Breast epithelium (tissue), 4 donors: ENCODE measurements at regions of chr9 and their contacts with region 1.

Region 1: GRCh38 chr9:117704024-117704575 is at the start of gene TLR4:
- DNase-seq: peak in 1 of 2 donors; percentile 35
- H3K4me3 ChIP-seq: peak within 1 kb of the TSS; percentile 43 to 69 (median 52)
- H3K27ac ChIP-seq: peak within 1 kb of the TSS; percentile 81 to 92
- H3K4me1 ChIP-seq: peaks cover 0 to 3% of the 10 kb centered on the region in 2 donors
- H3K27me3 ChIP-seq: no peaks in the 10 kb centered on the region
- CTCF ChIP-seq: no peak
- POLR2A ChIP-seq: no peak
- total RNA-seq, gene TLR4: 23.0 to 71.2 (median 31.1) TPM

Region 2: DNA sequence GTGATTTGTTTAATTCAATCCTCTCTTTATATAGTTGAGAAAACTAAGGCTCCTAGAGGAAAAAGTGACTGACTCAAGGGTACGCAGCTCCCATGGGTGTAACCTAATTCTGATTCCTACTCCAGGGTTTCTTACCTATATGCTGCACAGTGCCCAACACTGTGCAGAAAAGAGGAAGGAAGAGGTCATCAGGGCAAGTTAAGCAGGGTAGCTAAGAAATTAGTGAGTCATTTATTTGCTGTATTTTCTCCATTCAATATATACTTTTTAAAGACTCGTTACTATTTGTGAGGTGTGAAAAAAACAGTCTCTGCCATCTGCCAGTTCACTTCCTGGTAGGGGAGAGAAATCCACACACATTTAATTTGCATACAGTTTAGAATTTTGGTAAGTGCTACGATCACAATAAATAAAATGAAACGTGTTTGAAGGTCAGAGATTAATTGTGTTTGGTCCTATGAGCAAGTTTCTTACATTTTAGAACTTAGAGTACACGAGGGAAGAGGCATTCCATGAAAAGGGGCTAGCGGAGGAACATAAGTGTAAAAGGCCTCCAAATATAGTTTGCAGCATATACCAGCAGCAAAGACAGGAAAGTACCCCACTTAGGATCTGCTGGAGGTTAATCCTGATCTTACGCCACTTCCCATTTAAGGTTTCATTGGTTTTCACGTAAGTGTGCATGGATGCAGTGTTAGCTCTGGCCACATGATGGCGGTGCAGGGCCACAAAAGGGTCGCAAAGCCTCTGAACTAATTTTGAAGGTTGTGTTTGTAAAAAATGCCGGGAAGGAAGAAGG is 59.8 kb before region 1 on chr9:
- intact Hi-C with region 1: no loop called
- DNase-seq: peak; percentile 52 to 75
- H3K4me3 ChIP-seq: peak overlapping the region; percentile 10 to 59 (median 27)
- H3K27ac ChIP-seq: peak overlapping the region; percentile 15 to 48
- H3K4me1 ChIP-seq: peaks cover 0 to 13% of the 10 kb centered on the region in 2 donors
- H3K27me3 ChIP-seq: peaks cover 0 to 5% of the 10 kb centered on the region in 2 donors
- CTCF ChIP-seq: peak; percentile 77 to 92 (median 91)
- POLR2A ChIP-seq: no peak

Region 3: DNA sequence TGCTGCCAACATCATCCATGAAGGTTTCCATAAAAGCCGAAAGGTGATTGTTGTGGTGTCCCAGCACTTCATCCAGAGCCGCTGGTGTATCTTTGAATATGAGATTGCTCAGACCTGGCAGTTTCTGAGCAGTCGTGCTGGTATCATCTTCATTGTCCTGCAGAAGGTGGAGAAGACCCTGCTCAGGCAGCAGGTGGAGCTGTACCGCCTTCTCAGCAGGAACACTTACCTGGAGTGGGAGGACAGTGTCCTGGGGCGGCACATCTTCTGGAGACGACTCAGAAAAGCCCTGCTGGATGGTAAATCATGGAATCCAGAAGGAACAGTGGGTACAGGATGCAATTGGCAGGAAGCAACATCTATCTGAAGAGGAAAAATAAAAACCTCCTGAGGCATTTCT is 10.2 kb after region 1 on chr9:
- intact Hi-C with region 1: loop called (anchors 2 kb)
- DNase-seq: no peak
- H3K4me3 ChIP-seq: no peak overlapping the region
- H3K27ac ChIP-seq: no peak overlapping the region
- H3K4me1 ChIP-seq: no peaks in the 10 kb centered on the region
- H3K27me3 ChIP-seq: no peaks in the 10 kb centered on the region
- CTCF ChIP-seq: no peak
- POLR2A ChIP-seq: no peak